Activated T-helper 1 cell treated with anti-CD3 and anti-CD28 coated beads, Interleukin-12 subunit alpha, Interleukin-12 subunit beta, Interleukin-2, Interleukin-4 antibody, amounts not matched to agents 30 ng/mL and 10 ng/mL and 1 ng/mL, durations not matched to agents 14 hours and 24 hours and 36 hours (primary cell): ENCODE measurements at regions of chr1 and their contacts with region 1.

Region 1: GRCh38 chr1:222465211-222466041 is 82.5 kb downstream of the HHIPL2 start:
- DNase-seq: peak; percentile 73
- H3K4me3 Mint-ChIP-seq: peak overlapping the region; percentile 82
- H3K27ac Mint-ChIP-seq: peak overlapping the region; percentile 84
- H3K4me1 Mint-ChIP-seq: peaks cover 12% of the 10 kb centered on the region
- H3K27me3 Mint-ChIP-seq: peaks cover 27% of the 10 kb centered on the region

Region 2: DNA sequence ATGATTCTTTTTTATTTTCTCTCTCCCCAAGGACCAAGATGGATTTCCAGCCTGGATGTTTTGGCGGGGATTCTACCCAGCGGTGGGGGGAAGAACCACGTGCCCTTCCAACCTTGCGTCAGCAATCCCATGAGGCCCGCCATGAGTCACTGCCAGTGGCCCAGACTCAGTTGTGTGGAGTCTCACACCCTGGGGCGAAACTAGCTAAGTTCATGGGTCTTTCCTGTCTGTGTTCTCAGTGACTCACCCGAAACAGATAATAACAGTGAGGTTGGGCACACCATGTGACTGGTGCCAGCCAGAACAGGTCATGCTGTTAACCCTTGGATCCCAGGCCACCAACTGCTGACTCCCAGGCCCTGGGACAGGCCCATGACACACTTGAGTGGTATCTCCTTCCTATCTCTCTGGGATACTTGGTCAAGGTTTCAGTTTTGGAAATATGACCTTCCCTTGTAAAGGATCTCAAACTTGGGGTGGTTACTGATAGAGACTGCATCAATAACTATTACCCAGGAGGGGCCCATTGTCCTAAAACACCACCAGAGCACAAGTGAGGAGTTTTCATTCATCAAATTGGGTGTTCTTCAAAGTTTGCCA is 625.5 kb before region 1 on chr1:
- intact Hi-C with region 1: no loop called
- DNase-seq: peak; percentile 26
- H3K4me3 Mint-ChIP-seq: no peak overlapping the region
- H3K27ac Mint-ChIP-seq: peak overlapping the region; percentile 64
- H3K4me1 Mint-ChIP-seq: peaks cover 57% of the 10 kb centered on the region
- H3K27me3 Mint-ChIP-seq: peaks cover 2% of the 10 kb centered on the region

Region 3: GRCh38 chr1:222617367-222617951 is 152.0 kb after region 1 on chr1:
- intact Hi-C with region 1: loop called (anchors 1 kb)
- DNase-seq: peak; percentile 86
- H3K4me3 Mint-ChIP-seq: peak overlapping the region; percentile 82
- H3K27ac Mint-ChIP-seq: peak overlapping the region; percentile 92
- H3K4me1 Mint-ChIP-seq: peaks cover 34% of the 10 kb centered on the region
- H3K27me3 Mint-ChIP-seq: peaks cover 26% of the 10 kb centered on the region

Region 4: GRCh38 chr1:222643938-222644635 is 178.7 kb after region 1 on chr1:
- intact Hi-C with region 1: loop called (anchors 2 kb)
- DNase-seq: peak; percentile 98
- H3K4me3 Mint-ChIP-seq: peak overlapping the region; percentile 99
- H3K27ac Mint-ChIP-seq: peak overlapping the region; percentile 97
- H3K4me1 Mint-ChIP-seq: peaks cover 33% of the 10 kb centered on the region
- H3K27me3 Mint-ChIP-seq: no peaks in the 10 kb centered on the region

Region 5: DNA sequence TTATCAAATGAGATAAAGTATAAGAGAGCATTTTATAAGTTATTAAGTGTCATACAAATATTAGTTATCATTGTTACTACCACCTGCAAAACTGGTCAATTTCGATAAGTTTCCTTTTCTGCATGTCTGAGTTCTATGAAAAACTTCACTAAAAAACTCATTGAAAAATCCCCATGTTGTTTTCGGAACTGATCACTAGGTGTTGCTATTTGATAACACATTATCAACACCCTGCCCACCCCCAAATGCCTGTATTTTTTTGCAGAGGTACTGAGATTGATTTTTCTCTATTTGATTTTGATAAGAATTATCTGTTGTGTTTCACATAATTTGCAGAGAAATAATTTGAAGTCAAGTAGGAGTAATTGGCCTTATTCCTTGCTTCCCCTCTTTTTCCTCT is 327.3 kb after region 1 on chr1:
- intact Hi-C with region 1: loop called (anchors 1 kb)
- DNase-seq: no peak
- H3K4me3 Mint-ChIP-seq: no peak overlapping the region
- H3K27ac Mint-ChIP-seq: no peak overlapping the region
- H3K4me1 Mint-ChIP-seq: peaks cover 12% of the 10 kb centered on the region
- H3K27me3 Mint-ChIP-seq: peaks cover 9% of the 10 kb centered on the region

Region 6: DNA sequence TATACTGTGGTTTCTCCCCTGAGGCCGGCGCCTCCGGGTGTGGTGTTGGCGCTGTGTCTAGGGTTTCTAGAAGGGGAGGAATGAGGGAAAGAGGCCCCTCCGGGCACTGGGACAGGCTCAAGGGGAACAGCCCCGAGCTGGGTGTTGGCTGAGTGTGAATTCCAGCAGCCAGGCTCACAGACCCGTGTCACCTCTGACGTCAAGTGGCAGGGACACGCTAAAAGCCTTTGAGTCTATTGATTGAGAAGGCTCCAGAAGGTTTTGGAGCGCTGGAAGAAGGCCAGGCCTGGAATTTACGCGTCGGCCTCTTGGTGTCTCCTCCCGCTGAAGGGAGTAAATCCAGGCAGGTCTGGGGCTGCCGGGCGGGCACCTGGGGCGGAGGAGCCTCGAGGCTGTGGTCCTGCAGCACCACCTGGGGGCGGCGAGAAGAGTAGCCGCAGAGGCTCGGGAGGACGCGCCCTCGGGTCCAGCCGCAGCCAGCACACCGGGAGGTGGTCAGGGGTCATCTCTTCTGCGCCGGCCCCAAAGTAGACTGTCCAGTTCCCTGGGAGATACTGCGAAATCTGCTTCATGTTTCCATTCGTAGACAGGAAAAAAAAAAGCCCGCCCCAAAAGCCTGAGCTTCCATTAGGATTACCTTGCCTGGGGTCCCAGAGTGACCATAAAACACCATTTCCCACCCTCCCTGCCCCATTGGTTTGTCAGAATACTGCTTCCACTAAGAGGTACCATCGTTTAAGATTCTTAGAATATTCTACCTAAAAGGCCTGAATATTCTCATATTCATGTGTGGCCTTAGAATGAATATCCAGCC is 616.0 kb after region 1 on chr1:
- intact Hi-C with region 1: loop called (anchors 2 kb)
- DNase-seq: peak; percentile 45
- H3K4me3 Mint-ChIP-seq: peak overlapping the region; percentile 24
- H3K27ac Mint-ChIP-seq: peak overlapping the region; percentile 6
- H3K4me1 Mint-ChIP-seq: no peaks in the 10 kb centered on the region
- H3K27me3 Mint-ChIP-seq: peaks cover 4% of the 10 kb centered on the region

Region 7: DNA sequence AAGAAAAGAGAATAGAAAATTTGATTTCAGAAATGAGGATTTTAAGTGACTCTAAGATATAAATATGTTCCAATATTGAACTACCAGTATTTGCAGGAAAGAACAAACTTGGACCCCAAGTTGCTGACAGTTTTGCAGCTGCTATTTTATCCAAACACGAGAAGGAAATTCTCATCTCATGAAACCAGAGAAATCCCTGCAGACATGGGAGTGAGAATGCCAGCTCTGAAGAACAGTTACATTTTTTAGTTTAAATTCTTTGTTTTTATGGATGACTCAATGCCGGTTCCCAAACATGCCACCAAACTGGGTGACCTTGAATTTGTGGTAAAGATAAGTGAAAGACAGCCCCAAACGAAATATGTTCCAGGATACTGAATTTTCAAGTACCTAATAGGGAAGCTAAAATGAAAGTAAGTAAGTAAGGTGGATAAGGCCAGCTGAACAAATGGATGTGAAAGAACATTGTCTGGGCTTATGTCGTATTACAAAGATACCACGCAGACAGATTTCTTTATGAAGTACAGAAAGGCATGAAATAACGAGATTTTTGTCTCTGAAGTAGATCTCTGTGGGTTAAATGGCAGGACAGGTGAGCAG is 657.7 kb after region 1 on chr1:
- intact Hi-C with region 1: loop called (anchors 1 kb)
- DNase-seq: no peak
- H3K4me3 Mint-ChIP-seq: peak overlapping the region; percentile 31
- H3K27ac Mint-ChIP-seq: no peak overlapping the region
- H3K4me1 Mint-ChIP-seq: peaks cover 8% of the 10 kb centered on the region
- H3K27me3 Mint-ChIP-seq: peaks cover 7% of the 10 kb centered on the region